Panc1 (cell line): ENCODE measurements at regions of chr1 and their contacts with region 1.

Region 1: DNA sequence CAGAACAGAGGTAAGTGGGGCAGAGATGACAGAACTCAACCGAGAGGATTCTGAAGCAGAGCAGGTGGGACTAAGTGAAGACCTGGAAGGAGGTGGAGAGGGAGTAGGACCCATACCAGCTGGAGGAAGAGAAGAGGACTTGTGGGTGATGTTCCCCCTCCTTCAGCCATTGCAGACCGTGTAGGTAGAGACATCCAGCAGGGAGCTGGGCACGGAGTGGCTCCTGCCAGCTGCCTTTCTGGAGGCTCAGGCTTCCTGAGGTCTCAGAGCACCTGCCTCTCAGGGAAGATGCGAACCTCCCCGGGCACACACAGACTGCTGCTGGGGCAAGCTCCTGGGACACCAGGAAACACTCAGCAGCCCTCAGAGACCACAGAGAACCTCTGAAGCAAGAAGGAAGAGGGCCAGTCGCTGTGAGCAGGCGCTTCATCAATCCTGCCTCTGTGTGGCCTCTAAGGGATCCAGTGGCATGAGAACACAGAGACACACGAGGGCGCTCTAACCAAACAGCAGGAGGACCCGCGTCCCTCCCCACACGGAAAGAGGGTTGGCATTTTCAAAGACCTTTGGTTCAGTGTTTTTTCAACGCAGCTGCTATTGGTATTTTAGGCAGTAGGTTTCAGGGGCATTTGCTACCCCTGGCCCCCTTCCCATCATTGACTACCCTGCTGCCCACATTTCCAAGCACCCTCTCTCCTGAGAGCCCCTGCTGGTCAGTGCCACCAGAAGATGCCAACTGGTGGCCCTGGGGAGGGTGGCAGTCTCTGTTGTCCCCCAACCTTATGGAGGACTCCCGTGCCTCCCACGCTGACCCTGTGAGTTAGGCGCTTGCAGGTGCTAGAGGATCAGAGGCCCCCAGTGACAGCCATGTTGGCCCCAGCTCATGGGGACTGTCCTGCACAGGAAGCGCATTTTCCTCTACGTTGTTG is 89.6 kb upstream of the EDN2 start:
- DNase-seq: peak; percentile 61
- ATAC-seq: peak; percentile 96
- H3K4me3 ChIP-seq: no peak overlapping the region
- H3K27ac ChIP-seq: no peak overlapping the region
- H3K4me1 ChIP-seq: no peaks in the 10 kb centered on the region
- H3K27me3 ChIP-seq: no peaks in the 10 kb centered on the region
- CTCF ChIP-seq: peak; percentile 96

Region 2: DNA sequence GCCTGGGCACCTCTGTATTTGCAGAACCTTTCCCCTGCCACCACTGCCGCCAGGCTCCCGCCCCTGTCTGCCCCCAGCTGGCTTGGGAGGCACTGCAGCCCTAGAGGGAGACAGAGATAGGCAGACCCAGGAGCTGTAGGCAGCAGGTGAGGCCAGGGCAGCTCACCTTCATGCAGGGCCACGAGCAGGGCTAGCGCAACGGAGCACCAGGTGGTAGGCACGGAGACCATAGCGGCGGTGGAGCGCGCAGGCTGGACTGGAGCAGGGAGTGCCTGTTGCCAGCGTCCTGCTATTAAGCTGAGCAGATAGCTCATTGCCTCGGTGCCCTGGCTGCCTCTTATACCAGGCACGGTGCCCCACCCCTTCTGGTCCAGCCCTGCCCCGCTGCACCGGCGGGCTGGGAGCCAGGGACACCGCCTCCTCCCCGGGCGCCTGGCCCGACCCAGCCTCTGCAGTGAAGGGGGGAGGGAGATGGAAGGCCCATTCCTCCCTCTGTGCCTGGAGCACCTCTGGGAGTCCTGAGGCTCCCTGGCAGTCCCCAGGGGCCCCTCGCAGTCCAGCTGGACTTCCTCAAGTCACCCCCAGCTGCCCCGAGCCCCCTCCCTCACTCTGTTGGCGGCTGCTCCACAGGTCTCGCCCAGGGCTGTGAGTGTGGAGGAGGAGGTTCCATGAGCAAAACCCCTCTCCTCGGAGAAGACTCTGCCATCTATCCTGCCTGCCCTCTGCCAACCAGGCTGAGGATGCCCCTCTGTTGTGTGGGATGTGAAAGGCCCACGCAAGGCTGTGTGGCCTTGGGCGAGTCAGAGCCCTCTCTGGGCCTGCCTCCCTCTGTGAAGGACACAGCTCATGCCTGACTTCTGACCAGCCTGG is 89.4 kb before region 1 on chr1 and contains the start of gene EDN2:
- CTCF ChIA-PET with region 1: no interaction called
- POLR2A ChIA-PET with region 1: no interaction called
- in situ Hi-C with region 1: no loop called
- intact Hi-C with region 1: no loop called
- DNase-seq: no peak
- ATAC-seq: peak; percentile 66
- H3K4me3 ChIP-seq: no peak within 1 kb of the TSS
- H3K27ac ChIP-seq: no peak within 1 kb of the TSS
- H3K4me1 ChIP-seq: peaks cover 16% of the 10 kb centered on the region
- H3K27me3 ChIP-seq: no peaks in the 10 kb centered on the region
- CTCF ChIP-seq: no peak
- total RNA-seq, gene EDN2: not detected

Region 3: GRCh38 chr1:41795205-41795762 is 221.2 kb after region 1 on chr1:
- CTCF ChIA-PET with region 1: no interaction called
- POLR2A ChIA-PET with region 1: no interaction called
- in situ Hi-C with region 1: no loop called
- intact Hi-C with region 1: loop called (anchors 1 kb)
- DNase-seq: no peak
- ATAC-seq: peak; percentile 65; the same call in 1 of the 2 replicates
- H3K4me3 ChIP-seq: no peak overlapping the region
- H3K27ac ChIP-seq: no peak overlapping the region
- H3K4me1 ChIP-seq: no peaks in the 10 kb centered on the region
- H3K27me3 ChIP-seq: no peaks in the 10 kb centered on the region
- CTCF ChIP-seq: no peak

Region 4: GRCh38 chr1:41977326-41977725 is 403.3 kb after region 1 on chr1:
- CTCF ChIA-PET with region 1: no interaction called
- POLR2A ChIA-PET with region 1: no interaction called
- in situ Hi-C with region 1: no loop called
- intact Hi-C with region 1: no loop called
- DNase-seq: no peak
- ATAC-seq: no peak
- H3K4me3 ChIP-seq: no peak overlapping the region
- H3K27ac ChIP-seq: no peak overlapping the region
- H3K4me1 ChIP-seq: peaks cover 13% of the 10 kb centered on the region; the same call in 1 of the 2 replicates
- H3K27me3 ChIP-seq: no peaks in the 10 kb centered on the region
- CTCF ChIP-seq: no peak